Astrocyte of the spinal cord (primary cell): ENCODE measurements at regions of chr7 and their contacts with region 1.

Region 1: GRCh38 chr7:128053023-128053422 is 21.8 kb upstream of the LRRC4 start:
- DNase-seq: no peak
- H3K4me3 ChIP-seq: no peak overlapping the region
- CTCF ChIP-seq: no peak

Region 2: DNA sequence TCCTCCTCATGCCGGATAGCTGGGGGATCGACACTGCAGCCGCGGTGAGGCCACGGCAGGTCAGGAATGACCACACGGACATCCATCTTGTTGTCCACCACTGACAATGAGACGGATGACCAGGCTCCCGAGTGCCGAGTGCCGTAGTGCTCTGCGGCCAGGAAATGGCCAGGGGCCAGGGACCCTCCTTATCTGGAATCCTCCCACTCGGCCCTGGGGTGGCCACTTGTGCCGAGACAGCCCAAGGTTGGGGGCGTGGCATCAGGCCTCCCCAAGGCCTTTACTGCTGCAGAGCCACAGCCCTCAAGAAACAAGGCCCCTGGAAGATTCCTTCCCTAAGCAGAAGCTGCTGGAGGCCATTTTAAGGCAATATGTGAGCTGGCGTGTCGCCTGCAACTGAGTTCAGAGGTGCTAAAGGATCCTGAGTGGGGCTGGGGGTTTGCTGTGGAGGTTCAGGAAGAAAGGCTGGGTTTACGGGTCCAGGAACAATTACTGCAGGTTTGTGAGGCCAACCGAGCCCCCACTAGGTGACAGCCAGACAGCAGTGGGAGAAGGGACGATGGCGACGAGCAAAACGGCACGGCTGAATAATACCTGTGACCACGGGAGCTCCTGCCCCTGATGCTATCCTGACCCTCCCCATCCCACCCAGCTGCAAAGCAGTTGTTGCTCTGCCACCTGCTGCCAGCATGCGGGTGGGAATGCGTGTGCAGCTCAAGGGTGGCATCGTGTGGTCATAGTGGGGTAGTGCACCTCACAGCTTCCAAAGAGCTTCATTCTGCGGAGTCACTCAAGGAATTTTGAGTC is 156.4 kb after region 1 on chr7:
- in situ Hi-C with region 1: loop called (anchors 25 kb)
- DNase-seq: peak; percentile 72
- H3K4me3 ChIP-seq: no peak overlapping the region
- CTCF ChIP-seq: peak; percentile 99